ENCODE measurements at regions of chr2 and their contacts with region 1.

Region 1: GRCh38 chr2:149561309-149561926 is 26.2 kb downstream of the MMADHC start:
- DNase-seq: peak; percentile 7 to 44 (median 12)
- H3K4me3 ChIP-seq: no peak overlapping the region
- H3K4me3 Mint-ChIP-seq: no peak overlapping the region
- H3K27ac ChIP-seq: no peak overlapping the region
- H3K27ac Mint-ChIP-seq: no peak overlapping the region
- H3K4me1 ChIP-seq: no peaks in the 10 kb centered on the region
- H3K4me1 Mint-ChIP-seq: no peaks in the 10 kb centered on the region
- H3K27me3 ChIP-seq: no peaks in the 10 kb centered on the region
- H3K27me3 Mint-ChIP-seq: peaks cover 0 to 4% (median 0%) of the 10 kb centered on the region in 3 donors
- CTCF ChIP-seq: peak; percentile 95

Region 2: GRCh38 chr2:149017116-149017985 is 544.1 kb before region 1 on chr2:
- intact Hi-C with region 1: loop called (anchors 2 to 5 kb)
- DNase-seq: peak; percentile 61 to 73 (median 72)
- H3K4me3 ChIP-seq: no peak overlapping the region
- H3K4me3 Mint-ChIP-seq: no peak overlapping the region
- H3K27ac ChIP-seq: no peak overlapping the region
- H3K27ac Mint-ChIP-seq: no peak overlapping the region
- H3K4me1 ChIP-seq: peaks cover 36 to 39% of the 10 kb centered on the region in 2 donors
- H3K4me1 Mint-ChIP-seq: peaks cover 43% of the 10 kb centered on the region
- H3K27me3 ChIP-seq: no peaks in the 10 kb centered on the region
- H3K27me3 Mint-ChIP-seq: peaks cover 0 to 5% (median 3%) of the 10 kb centered on the region in 3 donors
- CTCF ChIP-seq: peak; percentile 80

Region 3: GRCh38 chr2:149040451-149040850 is 521.0 kb before region 1 on chr2:
- intact Hi-C with region 1: loop called in 1 of 2 experiments (anchors 10 kb)
- DNase-seq: peak; percentile 28 to 54 (median 45)
- H3K4me3 ChIP-seq: no peak overlapping the region
- H3K4me3 Mint-ChIP-seq: peak overlapping the region in 1 of 2 donors; percentile 72
- H3K27ac ChIP-seq: no peak overlapping the region
- H3K27ac Mint-ChIP-seq: no peak overlapping the region
- H3K4me1 ChIP-seq: peaks cover 0 to 10% of the 10 kb centered on the region in 2 donors
- H3K4me1 Mint-ChIP-seq: peaks cover 10% of the 10 kb centered on the region
- H3K27me3 ChIP-seq: peaks cover 25 to 39% of the 10 kb centered on the region in 2 donors
- H3K27me3 Mint-ChIP-seq: peaks cover 44 to 68% (median 50%) of the 10 kb centered on the region in 3 donors
- CTCF ChIP-seq: peak; percentile 78

Region 4: GRCh38 chr2:149597668-149598326 is 36.4 kb after region 1 on chr2:
- intact Hi-C with region 1: no loop called
- DNase-seq: peak; percentile 40 to 71 (median 62)
- H3K4me3 ChIP-seq: no peak overlapping the region
- H3K4me3 Mint-ChIP-seq: no peak overlapping the region
- H3K27ac ChIP-seq: no peak overlapping the region
- H3K27ac Mint-ChIP-seq: peak overlapping the region in 1 of 7 donors; percentile 42
- H3K4me1 ChIP-seq: peaks cover 5 to 7% of the 10 kb centered on the region in 2 donors
- H3K4me1 Mint-ChIP-seq: peaks cover 14% of the 10 kb centered on the region
- H3K27me3 ChIP-seq: peaks cover 2 to 3% of the 10 kb centered on the region in 2 donors
- H3K27me3 Mint-ChIP-seq: peaks cover 2 to 7% (median 3%) of the 10 kb centered on the region in 3 donors
- CTCF ChIP-seq: peak; percentile 79